HEK293 (cell line): ENCODE measurements at regions of chr15 and their contacts with region 1.

Region 1: DNA sequence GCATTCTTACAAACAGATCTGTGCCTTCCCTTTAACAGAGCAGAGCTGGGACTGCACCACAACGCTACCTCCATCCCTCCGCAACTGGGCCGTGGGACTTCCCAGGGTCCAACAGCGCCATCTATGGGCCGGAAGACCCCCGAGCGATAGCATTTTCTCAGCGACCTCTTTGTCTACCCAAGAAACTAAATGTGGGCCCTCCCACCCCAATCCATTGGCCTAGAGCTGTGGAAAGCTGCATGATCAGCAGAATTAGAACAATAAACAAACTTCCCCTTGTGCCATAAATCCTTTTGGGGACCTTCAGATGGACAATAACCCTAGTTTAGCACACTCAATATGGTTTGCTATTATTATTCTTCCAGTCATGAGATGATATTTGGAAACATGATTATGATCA is 74.7 kb upstream of the NTRK3 start:
- H3K4me3 ChIP-seq: no peak overlapping the region
- H3K27ac ChIP-seq: no peak overlapping the region
- H3K4me1 ChIP-seq: no peaks in the 10 kb centered on the region
- CTCF ChIP-seq: 0 out of 2 replicates have a peak, but pooled peaks have one; percentile 19

Region 2: DNA sequence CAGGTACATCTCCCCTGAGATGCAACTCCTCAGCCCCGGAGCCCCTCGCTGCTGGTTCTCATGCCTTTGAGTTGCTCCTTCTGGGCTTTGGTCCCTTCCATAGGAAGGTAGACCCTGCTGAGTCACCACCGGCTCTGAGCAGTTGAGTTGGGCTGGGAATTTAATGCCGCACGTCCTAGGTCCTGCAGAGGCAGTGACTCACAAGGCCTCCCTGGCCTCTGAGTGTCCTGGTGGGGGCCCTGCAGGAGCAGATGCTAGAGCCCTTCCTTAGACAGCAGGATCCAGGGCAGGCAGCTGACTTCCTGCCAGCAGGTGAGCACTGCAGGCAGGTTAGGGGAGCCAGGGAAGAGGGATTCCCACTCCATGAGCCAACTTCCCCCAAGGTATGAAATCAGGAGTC is 69.2 kb before region 1 on chr15:
- CTCF ChIA-PET with region 1: no interaction called
- POLR2A ChIA-PET with region 1: no interaction called
- H3K4me3 ChIP-seq: no peak overlapping the region
- H3K27ac ChIP-seq: no peak overlapping the region
- H3K4me1 ChIP-seq: no peaks in the 10 kb centered on the region
- CTCF ChIP-seq: no peak

Region 3: GRCh38 chr15:88312941-88313579 is 18.2 kb before region 1 on chr15:
- CTCF ChIA-PET with region 1: interaction called, 21 read pairs
- POLR2A ChIA-PET with region 1: no interaction called
- H3K4me3 ChIP-seq: no peak overlapping the region
- H3K27ac ChIP-seq: no peak overlapping the region
- H3K4me1 ChIP-seq: no peaks in the 10 kb centered on the region
- CTCF ChIP-seq: no peak

Region 4: GRCh38 chr15:88321269-88321668 is 10.0 kb before region 1 on chr15:
- CTCF ChIA-PET with region 1: interaction called, 21 read pairs
- POLR2A ChIA-PET with region 1: no interaction called
- H3K4me3 ChIP-seq: no peak overlapping the region
- H3K27ac ChIP-seq: no peak overlapping the region
- H3K4me1 ChIP-seq: no peaks in the 10 kb centered on the region
- CTCF ChIP-seq: no peak

Region 5: GRCh38 chr15:88345962-88346361 is 14.7 kb after region 1 on chr15:
- CTCF ChIA-PET with region 1: interaction called, 10 read pairs
- POLR2A ChIA-PET with region 1: interaction called, 3 read pairs
- H3K4me3 ChIP-seq: no peak overlapping the region
- H3K27ac ChIP-seq: no peak overlapping the region
- H3K4me1 ChIP-seq: no peaks in the 10 kb centered on the region
- CTCF ChIP-seq: no peak